Activated B cell treated with CpG ODN at 0.5 μM for 24 hours (primary cell): ENCODE measurements at regions of chr16 and their contacts with region 1.

Region 1: DNA sequence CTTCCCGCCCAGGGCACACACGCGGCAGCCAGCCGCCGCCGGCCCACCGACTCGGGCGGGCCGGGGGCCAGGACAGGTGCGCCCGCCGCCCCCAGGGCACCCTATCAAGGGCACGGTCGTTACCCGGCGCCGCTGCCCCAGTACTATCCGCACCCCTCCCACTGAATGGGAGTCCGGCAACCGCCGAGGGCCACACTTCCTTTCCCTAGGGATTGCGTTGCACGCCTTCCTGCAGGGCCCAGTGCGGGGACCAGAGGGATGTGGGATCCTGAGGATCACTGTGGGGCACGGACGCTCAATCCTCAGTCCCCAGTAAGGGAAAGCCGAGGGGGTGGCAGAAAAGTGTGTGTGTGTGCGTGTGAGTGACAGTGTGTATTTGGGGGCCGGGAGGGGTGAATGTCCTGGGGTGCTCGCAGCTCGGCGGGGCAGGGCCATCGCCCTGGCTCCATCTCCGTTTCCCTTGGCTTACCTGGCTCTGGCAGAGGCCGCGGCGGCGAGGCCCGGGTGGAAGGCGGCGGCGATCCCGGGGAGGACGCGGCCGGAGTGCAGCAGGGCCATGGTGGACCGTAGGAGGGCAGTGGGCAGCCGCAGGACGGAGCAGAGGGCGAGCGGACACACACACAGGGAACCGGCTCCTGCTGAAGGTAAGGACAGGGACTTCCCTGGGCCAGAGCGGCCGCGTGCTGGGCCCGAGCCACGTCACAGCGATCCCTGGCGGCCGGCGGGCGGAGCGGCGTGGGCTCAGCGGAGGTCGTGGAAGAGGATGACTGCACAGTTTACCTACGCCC is at the start of gene GOT2:
- DNase-seq: peak; percentile 77
- ATAC-seq: peak; percentile 95
- H3K4me3 Mint-ChIP-seq: peak within 1 kb of the TSS; percentile 98
- H3K27ac Mint-ChIP-seq: peak within 1 kb of the TSS; percentile 62
- H3K4me1 Mint-ChIP-seq: peaks cover 36% of the 10 kb centered on the region
- H3K27me3 Mint-ChIP-seq: no peaks in the 10 kb centered on the region
- CTCF ChIP-seq: no peak
- total RNA-seq, gene GOT2: 53.6 and 59.2 TPM in 2 replicates

Region 2: DNA sequence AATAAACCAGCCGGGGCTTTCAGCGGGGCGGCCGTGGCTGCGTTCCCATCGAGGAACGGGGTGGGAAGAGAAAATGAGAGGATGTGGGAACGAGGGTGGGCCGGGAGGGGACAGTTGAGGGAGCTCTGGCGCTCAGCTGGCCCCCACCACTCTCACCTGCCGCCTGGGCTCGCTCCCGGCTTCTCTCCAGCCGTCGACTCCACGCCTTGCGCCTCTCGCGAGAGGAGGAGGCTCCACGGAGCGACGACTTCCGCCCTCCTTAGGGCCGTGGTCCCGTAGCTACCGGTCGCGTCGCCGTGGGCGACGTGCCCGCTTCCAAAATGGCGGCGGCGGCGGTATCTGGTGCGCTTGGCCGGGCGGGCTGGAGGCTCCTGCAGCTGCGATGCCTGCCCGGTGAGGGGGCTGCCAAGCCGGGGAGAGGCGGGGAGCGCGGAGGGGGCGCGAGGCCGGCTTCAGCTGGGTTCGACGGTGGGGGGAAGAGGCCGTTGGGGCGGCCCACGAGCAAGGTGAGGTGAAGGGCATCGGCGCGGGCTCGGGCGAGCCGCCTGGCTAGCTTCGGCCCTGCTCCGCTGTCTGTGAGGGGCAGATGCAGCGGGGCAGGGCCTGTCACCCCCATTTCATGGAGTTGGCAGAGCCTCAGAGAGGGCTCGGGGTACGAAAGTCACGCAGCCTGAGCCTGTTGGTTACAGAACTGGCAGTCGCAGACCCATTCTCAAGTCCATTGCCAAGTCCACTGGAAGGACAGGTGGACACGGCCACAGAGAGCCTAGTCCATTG is 1286.5 kb before region 1 on chr16 and contains the starts of genes CIAPIN1 and COQ9:
- CTCF ChIA-PET with region 1: no interaction called
- POLR2A ChIA-PET with region 1: no interaction called
- intact Hi-C with region 1: loop called (anchors 5 kb)
- DNase-seq: peak; percentile 82
- ATAC-seq: peak; percentile 98
- H3K4me3 Mint-ChIP-seq: peak within 1 kb of the TSS; percentile 91
- H3K27ac Mint-ChIP-seq: peak within 1 kb of the TSS; percentile 84
- H3K4me1 Mint-ChIP-seq: peaks cover 19% of the 10 kb centered on the region
- H3K27me3 Mint-ChIP-seq: no peaks in the 10 kb centered on the region
- CTCF ChIP-seq: no peak
- total RNA-seq, gene CIAPIN1: 47.1 and 52.3 TPM in 2 replicates
- total RNA-seq, gene COQ9: 30.4 and 34.1 TPM in 2 replicates

Region 3: GRCh38 chr16:58365623-58366022 is 368.2 kb before region 1 on chr16:
- CTCF ChIA-PET with region 1: no interaction called
- POLR2A ChIA-PET with region 1: interaction called, 10 read pairs
- intact Hi-C with region 1: no loop called
- DNase-seq: no peak
- ATAC-seq: no peak
- H3K4me3 Mint-ChIP-seq: no peak overlapping the region
- H3K27ac Mint-ChIP-seq: no peak overlapping the region
- H3K4me1 Mint-ChIP-seq: no peaks in the 10 kb centered on the region
- H3K27me3 Mint-ChIP-seq: peaks cover 19% of the 10 kb centered on the region
- CTCF ChIP-seq: no peak

Region 4: DNA sequence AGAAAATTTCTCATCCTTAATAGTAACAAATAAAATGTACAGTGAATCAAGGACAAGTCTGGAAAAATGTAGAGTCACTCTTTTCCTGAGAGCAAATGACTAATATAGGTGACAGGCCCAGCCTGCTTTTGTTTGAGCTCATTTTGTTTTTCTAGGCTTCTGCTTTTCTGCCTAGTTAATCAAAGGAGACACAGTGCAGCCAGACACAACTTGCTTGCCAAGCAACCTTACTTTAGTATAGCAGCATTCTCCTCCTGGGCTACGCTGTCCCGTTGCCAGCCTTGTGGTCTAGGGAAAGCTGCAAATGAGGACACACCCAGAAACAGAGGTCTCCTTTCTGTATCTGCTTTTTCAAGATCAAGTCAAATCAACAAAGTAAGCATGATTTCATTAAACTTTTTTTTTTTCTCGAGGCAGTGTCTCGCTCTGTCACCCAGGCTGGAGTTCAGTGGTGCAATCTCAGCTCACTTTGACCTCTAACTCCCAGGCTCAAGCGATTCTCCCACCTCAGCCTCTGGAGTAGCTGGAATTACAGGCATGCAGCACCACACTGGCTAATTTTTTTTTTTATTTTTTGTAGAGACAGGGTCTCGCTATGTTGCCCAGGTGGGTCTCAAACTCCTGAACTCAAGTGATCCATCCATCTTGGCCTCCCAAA is 324.4 kb before region 1 on chr16:
- CTCF ChIA-PET with region 1: no interaction called
- POLR2A ChIA-PET with region 1: no interaction called
- intact Hi-C with region 1: no loop called
- DNase-seq: no peak
- ATAC-seq: no peak
- H3K4me3 Mint-ChIP-seq: no peak overlapping the region
- H3K27ac Mint-ChIP-seq: no peak overlapping the region
- H3K4me1 Mint-ChIP-seq: peaks cover 16% of the 10 kb centered on the region
- H3K27me3 Mint-ChIP-seq: no peaks in the 10 kb centered on the region
- CTCF ChIP-seq: no peak

Region 5: DNA sequence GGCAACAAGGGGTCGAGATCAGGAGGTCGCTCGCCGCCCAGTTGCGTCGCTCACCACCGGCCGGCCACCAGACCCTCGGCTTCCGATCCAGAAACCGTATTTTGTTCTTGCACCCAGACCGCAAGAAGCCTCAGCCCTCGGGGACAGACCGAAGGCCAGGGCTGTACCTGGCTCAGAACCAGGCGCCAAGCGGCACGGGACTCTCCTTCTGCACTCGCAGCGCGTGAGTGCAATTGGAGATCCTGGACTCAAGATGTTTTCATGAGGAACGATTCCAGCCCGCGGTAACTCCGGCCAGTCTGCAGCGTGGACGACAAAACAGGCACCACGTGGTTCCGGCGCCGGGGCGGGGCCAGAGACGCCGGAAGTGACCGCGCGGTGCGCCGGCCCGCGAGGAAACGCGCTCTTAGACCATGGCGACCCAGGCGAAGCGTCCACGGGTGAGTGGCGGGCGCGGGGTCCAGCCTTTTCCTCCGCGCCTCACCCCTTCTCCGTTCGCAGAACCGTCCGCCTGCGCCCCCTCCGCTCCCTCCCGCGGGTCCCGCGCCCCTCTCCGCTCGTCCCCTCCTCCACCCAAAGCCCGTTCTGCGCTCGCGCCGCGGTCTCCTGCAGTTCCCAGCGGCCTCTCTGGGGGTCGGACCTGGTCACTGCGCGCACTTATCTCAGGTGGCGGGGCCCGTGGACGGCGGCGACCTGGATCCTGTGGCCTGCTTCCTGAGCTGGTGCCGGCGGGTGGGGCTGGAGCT is 218.6 kb before region 1 on chr16 and contains the start of gene SETD6:
- CTCF ChIA-PET with region 1: interaction called, 3 read pairs
- POLR2A ChIA-PET with region 1: no interaction called
- intact Hi-C with region 1: loop called (anchors 5 kb)
- DNase-seq: peak; percentile 81
- ATAC-seq: peak; percentile 77
- H3K4me3 Mint-ChIP-seq: peak within 1 kb of the TSS; percentile 91
- H3K27ac Mint-ChIP-seq: peak within 1 kb of the TSS; percentile 84
- H3K4me1 Mint-ChIP-seq: peaks cover 24% of the 10 kb centered on the region
- H3K27me3 Mint-ChIP-seq: no peaks in the 10 kb centered on the region
- CTCF ChIP-seq: no peak
- total RNA-seq, gene SETD6: 25.6 and 31.1 TPM in 2 replicates

Region 6: DNA sequence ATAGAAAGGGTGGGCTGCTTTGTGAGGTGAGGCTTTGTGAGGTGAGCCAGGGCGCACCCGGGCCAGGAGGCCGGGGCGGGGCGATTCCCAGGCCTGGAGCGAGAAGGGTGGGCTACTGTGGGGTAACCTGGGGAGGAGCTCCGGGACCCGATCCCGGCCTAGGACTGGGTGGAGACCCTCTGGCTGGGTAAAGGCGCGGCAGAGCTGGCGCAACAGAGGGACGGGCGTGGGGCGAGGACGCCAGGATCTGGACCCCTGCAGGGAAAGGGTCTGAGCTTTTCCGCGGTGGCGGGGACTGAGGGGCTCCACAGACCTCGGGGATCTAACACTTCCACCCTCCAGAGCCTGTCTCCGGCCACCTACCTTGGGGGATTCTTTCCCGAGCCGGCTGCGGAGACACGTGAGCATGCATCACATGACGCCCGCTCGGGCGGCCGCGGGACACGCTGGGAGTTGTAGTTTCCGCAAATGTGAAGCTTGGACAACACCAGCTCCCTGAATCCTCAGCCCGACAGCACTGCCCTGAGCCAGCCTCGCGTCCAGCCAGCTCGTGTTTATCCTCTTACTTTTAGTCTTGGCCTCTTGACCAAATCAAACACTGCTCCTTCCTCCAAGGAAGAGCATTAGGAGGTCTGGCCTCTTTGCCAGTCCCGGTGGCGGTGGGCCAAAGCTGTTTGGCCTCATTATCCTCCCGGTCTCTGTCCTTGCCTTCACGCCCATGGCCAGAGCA is 49.3 kb before region 1 on chr16 and contains the start of gene SLC38A7:
- CTCF ChIA-PET with region 1: no interaction called
- POLR2A ChIA-PET with region 1: interaction called, 5 read pairs
- intact Hi-C with region 1: loop called (anchors 1 kb)
- DNase-seq: peak; percentile 63
- ATAC-seq: peak; percentile 93
- H3K4me3 Mint-ChIP-seq: peak within 1 kb of the TSS; percentile 94
- H3K27ac Mint-ChIP-seq: peak within 1 kb of the TSS; percentile 82
- H3K4me1 Mint-ChIP-seq: peaks cover 20% of the 10 kb centered on the region
- H3K27me3 Mint-ChIP-seq: peaks cover under 1% of the 10 kb centered on the region
- CTCF ChIP-seq: no peak
- total RNA-seq, gene SLC38A7: 14.5 and 18.8 TPM in 2 replicates